GM10248 (cell line): ENCODE measurements at regions of chr11 and their contacts with region 1.

Region 1: GRCh38 chr11:13335319-13335718 is 57.7 kb downstream of the BMAL1 start:
- DNase-seq: peak; percentile 70
- CTCF ChIP-seq: peak; percentile 84

Region 2: DNA sequence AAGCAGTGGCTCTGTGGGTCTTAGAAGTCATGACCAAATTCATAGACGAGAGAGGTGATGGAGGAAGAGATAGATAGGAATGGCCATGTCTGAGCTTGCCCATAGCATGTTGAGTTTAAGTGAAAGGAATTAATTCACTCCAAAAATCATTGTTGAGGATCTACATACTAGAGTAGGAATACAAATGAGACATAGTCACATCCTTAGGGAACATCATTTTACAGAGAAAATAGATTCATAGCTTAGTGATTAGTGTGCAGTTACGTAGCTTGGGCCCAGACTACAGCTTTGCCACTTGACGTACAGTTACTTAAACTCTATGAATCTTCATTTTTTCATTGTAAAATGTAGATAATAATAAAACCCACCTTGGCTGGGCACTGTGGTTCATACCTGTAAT is 79.1 kb before region 1 on chr11:
- CTCF ChIA-PET with region 1: interaction called, 40 read pairs
- POLR2A ChIA-PET with region 1: no interaction called
- DNase-seq: no peak
- CTCF ChIP-seq: no peak

Region 3: DNA sequence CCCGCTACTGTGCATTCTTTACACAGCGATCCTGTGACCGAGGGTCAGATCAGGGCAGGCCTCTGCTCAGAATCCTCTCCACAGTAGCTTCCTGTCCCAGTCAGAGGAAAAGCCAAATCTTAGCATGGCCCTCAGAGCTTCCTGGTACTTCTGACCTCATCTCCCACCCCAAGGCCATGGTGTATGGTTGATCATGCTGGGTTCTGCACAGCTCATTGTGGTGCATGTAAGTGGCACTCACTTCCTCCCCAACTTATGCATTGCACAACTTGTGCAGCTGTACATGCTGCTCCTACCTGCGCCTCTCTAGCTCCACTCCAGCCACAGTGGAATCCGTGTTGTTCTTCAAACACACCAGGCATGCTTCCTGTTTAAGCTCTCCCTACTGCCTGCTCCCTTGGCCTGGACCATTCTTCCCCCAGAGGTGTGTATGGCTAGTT is 37.4 kb before region 1 on chr11:
- CTCF ChIA-PET with region 1: interaction called, 13 read pairs
- POLR2A ChIA-PET with region 1: no interaction called
- DNase-seq: no peak
- CTCF ChIP-seq: no peak

Region 4: GRCh38 chr11:13316528-13316961 is 18.8 kb before region 1 on chr11:
- CTCF ChIA-PET with region 1: interaction called, 53 read pairs
- POLR2A ChIA-PET with region 1: no interaction called
- DNase-seq: no peak
- CTCF ChIP-seq: no peak